PC-3 (cell line): ENCODE measurements at regions of chr10 and their contacts with region 1.

Region 1: DNA sequence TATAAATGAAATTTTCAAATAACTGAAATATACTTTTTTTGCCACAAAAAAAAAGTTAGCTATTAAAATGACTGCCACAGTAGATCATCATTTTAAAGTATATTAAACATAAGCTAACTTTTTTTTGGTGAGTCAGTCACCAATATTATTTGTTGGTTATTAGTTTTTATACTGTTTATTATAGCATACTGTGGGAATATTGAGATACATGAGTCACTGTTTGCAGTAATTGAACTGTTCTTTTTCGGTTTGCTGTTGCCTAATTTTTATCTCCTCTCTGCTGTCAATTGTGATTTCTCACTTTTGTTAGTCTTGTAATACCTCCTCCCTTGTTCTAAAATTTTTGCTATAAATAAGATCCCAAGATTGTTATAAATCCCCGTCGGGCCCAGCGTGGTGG is 45.7 kb downstream of the BTAF1 start:
- DNase-seq: peak; percentile 20
- ATAC-seq: peak; percentile 50
- H3K4me3 ChIP-seq: no peak overlapping the region
- H3K27ac ChIP-seq: no peak overlapping the region
- H3K4me1 ChIP-seq: peaks cover 12% of the 10 kb centered on the region
- H3K27me3 ChIP-seq: no peaks in the 10 kb centered on the region
- CTCF ChIP-seq: no peak

Region 2: GRCh38 chr10:91935884-91936283 is 33.4 kb before region 1 on chr10:
- CTCF ChIA-PET with region 1: no interaction called
- POLR2A ChIA-PET with region 1: interaction called, 10 read pairs
- intact Hi-C with region 1: no loop called
- DNase-seq: peak; percentile 85
- ATAC-seq: peak; percentile 81
- H3K4me3 ChIP-seq: peak overlapping the region; percentile 51
- H3K27ac ChIP-seq: peak overlapping the region; percentile 88
- H3K4me1 ChIP-seq: peaks cover 36% of the 10 kb centered on the region
- H3K27me3 ChIP-seq: no peaks in the 10 kb centered on the region
- CTCF ChIP-seq: no peak

Region 3: DNA sequence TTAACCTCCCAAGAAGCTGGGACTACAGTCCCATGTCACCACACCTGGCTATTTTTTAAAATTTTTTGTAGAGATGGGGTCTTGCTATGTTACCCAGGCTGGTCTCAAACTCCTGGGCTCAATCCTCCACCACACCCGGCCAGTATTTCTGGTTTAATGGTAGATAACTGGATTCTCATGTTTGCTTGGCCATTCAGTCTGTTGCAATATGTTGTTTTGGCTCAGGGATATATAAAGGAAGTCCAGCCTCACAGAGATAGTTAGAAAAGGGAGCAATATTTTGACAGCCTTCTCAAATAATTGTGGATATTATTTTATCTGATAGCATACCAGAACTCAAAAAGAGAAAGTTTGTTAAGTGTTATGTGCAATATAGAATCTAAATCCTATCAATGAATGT is 36.7 kb after region 1 on chr10:
- CTCF ChIA-PET with region 1: no interaction called
- POLR2A ChIA-PET with region 1: no interaction called
- intact Hi-C with region 1: loop called (anchors 5 kb)
- DNase-seq: no peak
- ATAC-seq: no peak
- H3K4me3 ChIP-seq: no peak overlapping the region
- H3K27ac ChIP-seq: no peak overlapping the region
- H3K4me1 ChIP-seq: no peaks in the 10 kb centered on the region
- H3K27me3 ChIP-seq: no peaks in the 10 kb centered on the region
- CTCF ChIP-seq: no peak